Activated CD4-positive, alpha-beta T cell treated with anti-CD3 and anti-CD28 coated beads for 36 hours (primary cell): ENCODE measurements at regions of chr7 and their contacts with region 1.

Region 1: GRCh38 chr7:1940402-1940786 is 270.3 kb downstream of the ELFN1 start:
- DNase-seq: peak; percentile 96
- ATAC-seq: peak; percentile 90
- H3K4me3 Mint-ChIP-seq: peak overlapping the region; percentile 81
- H3K27ac Mint-ChIP-seq: peak overlapping the region; percentile 93
- H3K4me1 Mint-ChIP-seq: peaks cover 74% of the 10 kb centered on the region
- H3K27me3 Mint-ChIP-seq: no peaks in the 10 kb centered on the region

Region 2: GRCh38 chr7:1331561-1332488 is 608.6 kb before region 1 on chr7:
- CTCF ChIA-PET with region 1: no interaction called
- POLR2A ChIA-PET with region 1: no interaction called
- intact Hi-C with region 1: no loop called
- DNase-seq: no peak
- ATAC-seq: no peak
- H3K4me3 Mint-ChIP-seq: no peak overlapping the region
- H3K27ac Mint-ChIP-seq: no peak overlapping the region
- H3K4me1 Mint-ChIP-seq: no peaks in the 10 kb centered on the region
- H3K27me3 Mint-ChIP-seq: peaks cover 10% of the 10 kb centered on the region

Region 3: GRCh38 chr7:1412322-1413261 is 527.8 kb before region 1 on chr7:
- CTCF ChIA-PET with region 1: no interaction called
- POLR2A ChIA-PET with region 1: no interaction called
- intact Hi-C with region 1: loop called in 1 of 2 experiments (anchors 1 kb)
- DNase-seq: peak; percentile 97
- ATAC-seq: peak; percentile 82
- H3K4me3 Mint-ChIP-seq: no peak overlapping the region
- H3K27ac Mint-ChIP-seq: no peak overlapping the region
- H3K4me1 Mint-ChIP-seq: peaks cover 14% of the 10 kb centered on the region
- H3K27me3 Mint-ChIP-seq: peaks cover 5% of the 10 kb centered on the region

Region 4: GRCh38 chr7:1825897-1826741 is 114.3 kb before region 1 on chr7:
- CTCF ChIA-PET with region 1: no interaction called
- POLR2A ChIA-PET with region 1: no interaction called
- intact Hi-C with region 1: no loop called
- DNase-seq: no peak
- ATAC-seq: no peak
- H3K4me3 Mint-ChIP-seq: no peak overlapping the region
- H3K27ac Mint-ChIP-seq: no peak overlapping the region
- H3K4me1 Mint-ChIP-seq: peaks cover 33% of the 10 kb centered on the region
- H3K27me3 Mint-ChIP-seq: no peaks in the 10 kb centered on the region

Region 5: DNA sequence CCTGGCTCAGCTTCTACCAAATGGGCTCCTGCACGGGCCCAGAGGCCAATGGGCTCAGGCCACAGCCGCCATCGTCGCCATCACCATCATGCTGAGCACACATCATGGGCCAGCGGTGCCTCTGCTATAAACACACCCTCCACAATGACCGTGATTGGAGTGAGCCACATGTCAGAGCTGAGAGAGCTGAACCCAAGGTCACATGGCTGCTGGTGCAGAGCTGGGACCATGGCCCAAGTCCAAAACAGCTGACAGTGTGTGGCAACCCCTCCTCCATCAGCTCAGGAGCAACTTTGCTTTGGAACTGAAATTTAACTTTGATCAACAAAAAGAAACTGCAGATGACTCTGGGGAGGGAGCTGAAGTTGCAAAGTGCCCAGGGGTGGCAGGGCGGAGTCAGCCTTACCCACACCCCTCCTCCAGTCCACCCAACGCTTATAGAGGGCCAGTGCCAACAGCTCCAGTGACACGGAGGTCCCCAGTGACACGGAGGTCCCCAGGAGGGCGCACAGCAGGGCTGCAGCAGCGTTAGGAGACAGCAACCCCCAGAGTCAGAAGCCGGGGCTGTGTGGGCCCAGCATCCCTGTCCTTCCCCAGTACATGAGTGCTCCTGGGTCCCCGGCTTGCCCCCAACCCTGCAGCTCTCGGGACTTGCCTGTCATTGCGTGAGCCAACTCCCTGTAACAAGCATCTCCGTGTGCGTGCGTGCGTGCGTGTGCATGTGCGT is 20.7 kb before region 1 on chr7:
- CTCF ChIA-PET with region 1: interaction called, 3 read pairs
- POLR2A ChIA-PET with region 1: interaction called, 4 read pairs
- intact Hi-C with region 1: loop called (anchors 1 kb)
- DNase-seq: no peak
- ATAC-seq: peak; percentile 17
- H3K4me3 Mint-ChIP-seq: peak overlapping the region; percentile 68
- H3K27ac Mint-ChIP-seq: peak overlapping the region; percentile 76
- H3K4me1 Mint-ChIP-seq: peaks cover 70% of the 10 kb centered on the region
- H3K27me3 Mint-ChIP-seq: peaks cover 11% of the 10 kb centered on the region

Region 6: DNA sequence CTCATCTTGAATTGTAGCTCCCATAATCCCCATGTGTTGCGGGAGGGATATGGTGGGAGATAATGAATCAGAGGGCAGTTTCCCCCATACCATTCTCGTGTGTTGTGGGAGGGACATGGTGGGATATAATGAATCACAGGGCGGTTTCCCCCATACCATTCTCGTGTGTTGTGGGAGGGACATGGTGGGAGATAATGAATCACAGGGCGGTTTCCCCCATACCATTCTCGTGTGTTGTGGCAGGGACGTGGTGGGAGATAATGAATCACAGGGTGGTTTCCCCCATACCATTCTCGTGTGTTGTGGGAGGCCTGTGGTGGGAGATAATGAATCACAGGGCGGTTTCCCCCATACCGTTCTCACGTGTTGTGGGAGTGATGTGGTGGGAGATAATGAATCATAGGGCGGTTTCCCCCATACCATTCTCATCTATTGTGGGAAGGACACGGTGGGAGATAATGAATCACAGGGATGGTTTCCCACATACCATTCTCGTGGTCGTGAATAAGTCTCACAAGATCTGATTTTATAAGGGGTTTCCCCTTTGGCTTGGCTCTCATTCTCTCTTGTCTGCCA is 21.4 kb after region 1 on chr7:
- CTCF ChIA-PET with region 1: no interaction called
- POLR2A ChIA-PET with region 1: no interaction called
- intact Hi-C with region 1: loop called (anchors 1 kb)
- DNase-seq: peak; percentile 75
- ATAC-seq: peak; percentile 78
- H3K4me3 Mint-ChIP-seq: peak overlapping the region; percentile 55
- H3K27ac Mint-ChIP-seq: peak overlapping the region; percentile 82
- H3K4me1 Mint-ChIP-seq: peaks cover 17% of the 10 kb centered on the region
- H3K27me3 Mint-ChIP-seq: no peaks in the 10 kb centered on the region

Region 7: DNA sequence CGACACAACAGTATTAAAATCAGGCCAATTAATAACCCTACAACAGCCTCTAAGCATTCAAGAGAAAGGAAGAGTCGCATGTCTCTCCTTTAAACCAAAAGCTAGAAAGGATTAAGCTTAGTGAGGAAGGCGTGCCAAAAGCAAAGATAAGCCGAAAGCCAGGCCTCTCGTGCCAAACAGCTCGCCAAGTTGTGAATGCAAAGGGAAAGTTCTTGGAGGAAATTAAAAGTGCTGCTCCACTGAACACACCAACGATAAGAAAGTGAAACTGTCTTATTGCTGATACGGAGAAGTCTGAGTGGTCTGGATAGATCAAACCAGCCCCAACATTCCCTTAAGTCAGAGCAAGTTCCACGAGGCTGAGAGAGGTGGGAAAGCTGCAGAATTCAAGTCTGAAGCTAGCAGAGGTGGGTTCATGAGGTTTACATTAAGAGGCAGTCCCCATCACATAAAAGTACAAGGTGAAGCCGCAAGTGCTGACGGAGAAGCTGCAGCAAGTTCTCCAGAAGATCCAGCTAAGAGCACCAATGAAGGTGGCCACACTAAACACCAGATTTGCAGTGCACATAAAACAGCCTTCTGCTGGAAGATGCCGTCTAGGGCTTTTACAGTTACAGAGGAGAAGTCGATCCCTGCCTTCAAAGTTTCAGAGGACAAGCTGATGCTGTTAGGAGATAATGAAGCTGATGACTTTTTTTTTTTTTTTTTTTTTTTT is 97.6 kb after region 1 on chr7:
- CTCF ChIA-PET with region 1: no interaction called
- POLR2A ChIA-PET with region 1: no interaction called
- intact Hi-C with region 1: loop called in 1 of 2 experiments (anchors 1 kb)
- DNase-seq: peak; percentile 30
- ATAC-seq: peak; percentile 65
- H3K4me3 Mint-ChIP-seq: peak overlapping the region; percentile 69
- H3K27ac Mint-ChIP-seq: peak overlapping the region; percentile 89
- H3K4me1 Mint-ChIP-seq: peaks cover 55% of the 10 kb centered on the region
- H3K27me3 Mint-ChIP-seq: no peaks in the 10 kb centered on the region

Region 8: DNA sequence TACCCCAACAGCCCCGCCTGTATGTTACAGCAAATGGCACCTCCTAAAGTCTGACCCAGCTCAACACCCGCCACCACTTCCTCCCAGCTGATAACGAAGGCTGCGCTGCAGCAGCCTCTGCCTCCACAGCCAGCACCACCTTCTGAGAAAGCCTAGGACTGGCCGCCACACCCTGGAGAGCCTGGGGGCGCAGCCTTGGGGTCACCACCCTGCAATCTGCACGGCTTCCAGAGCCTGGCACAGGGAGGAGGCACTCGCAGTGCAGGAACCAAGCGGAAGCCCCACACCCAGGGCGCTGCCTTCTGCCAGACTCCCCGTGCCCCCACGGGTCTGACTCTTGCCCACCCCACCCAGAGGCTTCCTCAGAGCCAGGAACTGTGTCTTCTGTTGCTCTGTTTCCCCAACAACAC is 179.9 kb after region 1 on chr7:
- CTCF ChIA-PET with region 1: no interaction called
- POLR2A ChIA-PET with region 1: no interaction called
- intact Hi-C with region 1: no loop called
- DNase-seq: peak; percentile 61
- ATAC-seq: peak; percentile 86
- H3K4me3 Mint-ChIP-seq: no peak overlapping the region
- H3K27ac Mint-ChIP-seq: peak overlapping the region; percentile 55
- H3K4me1 Mint-ChIP-seq: peaks cover 12% of the 10 kb centered on the region
- H3K27me3 Mint-ChIP-seq: no peaks in the 10 kb centered on the region

Region 9: DNA sequence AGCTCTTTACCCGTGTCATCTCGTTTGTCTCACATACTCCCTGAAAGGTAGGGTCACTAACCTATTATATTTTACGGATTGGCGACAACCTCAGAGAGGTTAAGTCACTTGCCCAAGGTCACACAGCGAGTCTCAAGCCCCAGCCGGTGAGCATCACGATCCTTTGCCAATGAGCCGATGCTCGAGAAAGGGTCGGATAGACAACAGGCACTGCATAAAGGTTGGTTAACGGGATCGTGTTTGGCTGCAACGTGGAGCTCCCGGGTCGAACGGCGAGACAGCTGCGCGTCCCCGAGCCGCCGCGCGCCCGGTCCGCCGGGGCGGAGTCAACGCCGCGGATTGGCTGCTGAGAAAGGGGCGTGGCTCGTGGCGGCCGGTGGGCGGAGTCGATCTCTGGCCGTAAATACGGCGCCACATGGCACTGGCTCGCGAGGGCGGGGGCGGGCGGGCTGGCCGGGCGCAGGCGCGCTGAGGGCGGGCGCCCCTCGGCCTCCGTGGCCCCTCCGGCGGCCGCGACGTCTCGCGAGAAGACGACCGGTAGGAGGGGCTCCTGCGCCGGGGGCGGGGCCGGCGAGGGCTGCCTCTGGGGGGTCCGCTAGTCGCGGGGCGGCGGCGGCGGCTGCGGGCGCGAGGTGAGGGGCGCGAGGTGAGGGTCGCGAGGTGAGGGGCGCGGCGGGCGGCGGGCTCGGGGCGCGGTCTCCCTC is 462.8 kb after region 1 on chr7 and contains the start of gene CHST12:
- CTCF ChIA-PET with region 1: no interaction called
- POLR2A ChIA-PET with region 1: no interaction called
- intact Hi-C with region 1: loop called in 1 of 2 experiments (anchors 5 kb)
- DNase-seq: peak; percentile 97
- ATAC-seq: peak; percentile 70
- H3K4me3 Mint-ChIP-seq: peak within 1 kb of the TSS; percentile 79
- H3K27ac Mint-ChIP-seq: no peak within 1 kb of the TSS
- H3K4me1 Mint-ChIP-seq: peaks cover 41% of the 10 kb centered on the region
- H3K27me3 Mint-ChIP-seq: peaks cover 6% of the 10 kb centered on the region
- total RNA-seq, gene CHST12: 1.8 to 1.9 TPM